Sciatic nerve (tissue), 2 donors: ENCODE measurements at regions of chr3 and their contacts with region 1.

Region 1: DNA sequence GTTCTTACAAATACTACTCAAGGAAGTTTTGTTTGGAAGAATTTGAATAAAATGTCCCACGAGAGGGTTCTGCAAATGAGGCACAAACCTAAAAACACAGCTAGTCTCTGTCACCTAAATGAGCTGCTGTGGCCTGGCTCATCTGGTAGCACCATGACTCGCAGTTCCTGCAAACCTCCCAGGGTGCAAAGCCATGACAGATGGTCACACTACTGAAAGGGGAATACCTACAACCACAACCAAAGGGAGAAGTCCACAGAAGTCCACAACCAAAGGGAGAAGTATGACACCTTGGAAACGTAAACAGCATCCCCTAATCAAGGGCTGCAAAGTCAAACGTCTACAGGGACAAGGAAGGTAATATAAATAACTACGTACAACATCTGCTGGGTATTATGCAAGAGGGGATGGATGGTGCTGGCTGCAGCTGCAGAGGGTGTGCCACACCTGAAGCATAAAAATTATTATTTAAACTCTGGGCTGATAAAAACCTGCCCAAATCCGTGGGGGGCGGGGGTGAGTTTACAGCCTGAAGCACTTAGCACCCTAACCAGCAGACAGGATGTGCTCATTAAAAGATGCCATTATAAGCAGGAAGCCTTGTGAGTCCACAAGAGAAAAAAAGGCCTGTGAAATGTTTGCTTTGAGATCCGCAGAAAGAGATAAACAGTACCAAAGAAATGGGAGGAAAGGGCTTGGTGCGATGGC is 184.0 kb downstream of the MAGI1 start:
- DNase-seq: no peak
- ATAC-seq: peak; percentile 36

Region 2: DNA sequence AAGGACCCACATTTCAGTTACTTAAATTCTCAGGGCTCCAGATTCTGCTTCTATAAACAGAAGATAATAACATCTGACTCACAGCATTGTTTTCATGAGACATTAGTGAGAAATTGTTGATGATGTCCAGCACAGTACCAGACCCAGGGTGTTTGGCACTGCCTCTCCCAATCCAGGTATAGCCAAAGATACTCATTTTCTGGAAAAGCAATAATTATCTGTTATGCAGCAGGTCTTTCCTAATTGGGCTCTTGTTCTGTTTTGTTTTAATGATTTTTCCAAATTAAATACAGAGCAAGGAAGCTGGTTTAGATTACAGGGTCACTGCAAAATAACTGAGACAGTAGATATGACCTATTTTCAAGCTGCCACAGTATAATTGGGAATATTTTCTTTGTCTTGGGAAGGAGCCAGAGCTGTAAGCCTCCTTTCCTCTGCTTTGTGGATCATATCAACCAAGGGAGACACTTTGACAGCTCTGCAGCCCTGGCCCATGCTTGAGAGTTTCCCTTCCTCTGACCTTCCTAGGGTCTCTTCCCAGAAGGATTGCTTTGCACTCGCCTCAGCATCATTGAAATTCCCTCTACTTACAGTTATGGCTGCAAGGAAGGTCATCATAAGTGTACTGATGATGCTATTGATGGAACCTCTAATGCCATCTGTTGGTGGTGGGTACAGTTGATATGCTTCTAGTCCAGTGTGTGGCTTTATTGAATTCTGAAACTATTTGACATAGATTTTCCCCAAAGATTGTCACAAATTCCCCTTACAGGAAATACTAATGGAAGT is 644.5 kb before region 1 on chr3:
- intact Hi-C with region 1: loop called (anchors 5 kb)
- DNase-seq: no peak
- ATAC-seq: no peak

Region 3: DNA sequence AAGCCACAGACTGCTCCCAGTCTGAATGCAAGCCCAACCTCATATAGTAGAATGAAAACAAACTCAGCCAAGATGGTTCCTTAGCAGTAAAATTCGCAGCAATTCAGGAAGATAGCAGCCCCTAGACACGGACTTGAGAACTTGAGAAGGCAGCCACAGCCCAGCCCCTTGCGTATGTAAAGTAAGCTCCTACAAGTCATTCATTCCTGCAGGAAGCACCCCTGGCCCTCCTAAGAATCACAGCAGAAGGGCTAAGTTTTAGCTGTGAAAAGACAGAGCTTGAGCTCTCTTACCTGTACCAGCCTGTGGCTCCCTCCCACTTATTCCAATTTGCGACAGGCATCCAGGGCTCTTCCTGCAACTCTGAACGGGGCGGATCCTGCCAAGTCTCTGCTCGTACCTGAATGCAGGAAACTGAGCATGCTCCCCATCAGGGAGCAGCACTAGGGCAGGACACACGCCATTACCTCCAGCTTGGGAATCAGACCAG is 47.6 kb after region 1 on chr3:
- intact Hi-C with region 1: no loop called
- DNase-seq: no peak
- ATAC-seq: no peak

Region 4: GRCh38 chr3:65963787-65964677 is 109.3 kb after region 1 on chr3:
- intact Hi-C with region 1: no loop called
- DNase-seq: no peak
- ATAC-seq: no peak